ENCODE measurements at regions of chr11 and their contacts with region 1.

Region 1: DNA sequence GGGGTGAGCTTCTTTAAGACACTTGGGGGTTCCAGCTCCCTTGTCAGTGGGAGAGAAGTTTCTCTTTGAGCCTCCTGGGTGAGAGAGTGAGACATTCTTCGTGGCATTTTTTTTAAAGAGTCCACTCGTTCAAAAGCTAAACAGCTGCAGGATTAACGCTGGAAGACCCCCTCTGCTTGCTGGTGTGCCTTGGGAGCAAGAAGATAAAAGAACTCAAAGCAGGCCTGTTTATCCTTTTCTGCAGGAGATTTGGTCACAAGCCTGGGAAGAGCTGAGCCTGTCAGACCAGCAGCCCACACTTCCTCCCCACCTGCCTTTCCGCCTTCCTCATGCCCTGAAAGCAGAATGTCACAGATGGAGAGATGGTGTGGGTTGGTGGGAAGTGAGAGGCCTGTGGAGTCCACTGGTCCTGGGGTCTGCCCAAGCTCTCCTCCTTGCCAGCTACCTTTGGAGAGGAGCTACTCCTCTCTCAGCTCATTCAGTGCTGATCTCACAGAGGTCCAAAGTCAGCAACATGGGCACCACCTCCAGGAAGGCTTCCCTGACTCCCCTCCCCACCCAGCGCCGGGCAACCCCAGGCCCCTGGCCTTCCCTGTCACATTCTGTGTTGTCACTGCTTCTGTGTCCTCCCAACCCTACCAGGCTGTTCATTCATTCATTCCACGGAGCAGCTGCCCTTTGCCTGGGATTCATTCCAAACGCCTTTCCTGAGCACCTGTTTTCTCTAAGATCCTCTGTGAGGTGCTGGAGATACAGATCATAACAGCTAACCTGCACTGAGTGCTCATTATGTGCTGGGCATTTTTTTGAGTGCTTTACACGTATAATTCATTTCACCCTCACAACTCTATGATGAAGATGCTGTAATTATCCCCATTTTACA is 6.7 kb downstream of the GDPD5 start:
- DNase-seq: no peak
- ATAC-seq: no peak
- H3K4me3 ChIP-seq: no peak overlapping the region
- H3K27ac ChIP-seq: no peak overlapping the region
- H3K4me1 ChIP-seq: peaks cover 0 to 24% (median 8%) of the 10 kb centered on the region in 9 donors
- H3K27me3 ChIP-seq: peaks cover 0 to 4% (median 0%) of the 10 kb centered on the region in 7 donors
- CTCF ChIP-seq: no peak

Region 2: DNA sequence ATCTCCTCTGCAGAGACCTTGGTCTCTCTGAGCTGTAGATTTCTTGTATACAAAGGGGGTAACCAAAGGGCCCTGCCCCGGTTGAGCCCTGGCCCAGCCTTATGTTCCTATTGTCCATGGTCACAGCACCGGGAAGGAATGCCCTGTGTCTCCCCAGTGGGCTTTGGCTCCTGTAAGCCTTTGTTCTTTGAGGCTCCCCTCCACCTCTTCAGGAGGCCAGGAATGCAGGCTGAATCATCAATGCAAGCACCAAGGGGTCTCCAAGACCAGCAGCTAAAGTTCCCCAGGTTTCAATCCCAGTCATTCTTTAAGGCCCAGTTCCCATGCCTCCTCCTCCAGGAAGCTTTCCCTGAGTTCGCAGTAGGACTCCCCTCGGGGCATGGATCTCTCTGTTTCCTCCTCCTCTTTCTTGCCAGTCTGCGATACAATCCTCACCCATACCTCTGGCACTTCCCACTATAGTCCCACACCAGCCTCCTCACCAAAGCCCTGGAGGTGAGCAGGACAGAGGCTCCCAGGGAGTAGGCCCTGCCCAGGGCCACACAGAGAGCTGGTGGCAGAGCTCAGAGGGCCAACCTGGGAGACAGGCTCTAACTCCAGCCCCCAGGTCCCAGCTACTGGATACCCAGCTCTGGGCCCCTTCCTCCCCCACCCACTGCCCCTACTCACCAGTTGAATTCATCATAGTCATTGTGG is 56.7 kb before region 1 on chr11:
- intact Hi-C with region 1: loop called in 1 of 10 experiments (anchors 5 kb)
- DNase-seq: no peak
- ATAC-seq: no peak
- H3K4me3 ChIP-seq: no peak overlapping the region
- H3K27ac ChIP-seq: no peak overlapping the region
- H3K4me1 ChIP-seq: peaks cover 0 to 27% (median 19%) of the 10 kb centered on the region in 9 donors
- H3K27me3 ChIP-seq: no peaks in the 10 kb centered on the region
- CTCF ChIP-seq: no peak

Region 3: GRCh38 chr11:75554258-75555022 is 35.4 kb after region 1 on chr11:
- intact Hi-C with region 1: no loop called
- DNase-seq: peak; percentile 93 to 94
- ATAC-seq: peak; percentile 87 to 95 (median 93)
- H3K4me3 ChIP-seq: peak overlapping the region in 7 of 10 donors; percentile 8 to 42 (median 34)
- H3K27ac ChIP-seq: peak overlapping the region; percentile 52 to 98 (median 92)
- H3K4me1 ChIP-seq: peaks cover 13 to 58% (median 47%) of the 10 kb centered on the region in 9 donors
- H3K27me3 ChIP-seq: no peaks in the 10 kb centered on the region
- CTCF ChIP-seq: no peak